Calu3 (cell line): ENCODE measurements at regions of chr15 and their contacts with region 1.

Region 1: DNA sequence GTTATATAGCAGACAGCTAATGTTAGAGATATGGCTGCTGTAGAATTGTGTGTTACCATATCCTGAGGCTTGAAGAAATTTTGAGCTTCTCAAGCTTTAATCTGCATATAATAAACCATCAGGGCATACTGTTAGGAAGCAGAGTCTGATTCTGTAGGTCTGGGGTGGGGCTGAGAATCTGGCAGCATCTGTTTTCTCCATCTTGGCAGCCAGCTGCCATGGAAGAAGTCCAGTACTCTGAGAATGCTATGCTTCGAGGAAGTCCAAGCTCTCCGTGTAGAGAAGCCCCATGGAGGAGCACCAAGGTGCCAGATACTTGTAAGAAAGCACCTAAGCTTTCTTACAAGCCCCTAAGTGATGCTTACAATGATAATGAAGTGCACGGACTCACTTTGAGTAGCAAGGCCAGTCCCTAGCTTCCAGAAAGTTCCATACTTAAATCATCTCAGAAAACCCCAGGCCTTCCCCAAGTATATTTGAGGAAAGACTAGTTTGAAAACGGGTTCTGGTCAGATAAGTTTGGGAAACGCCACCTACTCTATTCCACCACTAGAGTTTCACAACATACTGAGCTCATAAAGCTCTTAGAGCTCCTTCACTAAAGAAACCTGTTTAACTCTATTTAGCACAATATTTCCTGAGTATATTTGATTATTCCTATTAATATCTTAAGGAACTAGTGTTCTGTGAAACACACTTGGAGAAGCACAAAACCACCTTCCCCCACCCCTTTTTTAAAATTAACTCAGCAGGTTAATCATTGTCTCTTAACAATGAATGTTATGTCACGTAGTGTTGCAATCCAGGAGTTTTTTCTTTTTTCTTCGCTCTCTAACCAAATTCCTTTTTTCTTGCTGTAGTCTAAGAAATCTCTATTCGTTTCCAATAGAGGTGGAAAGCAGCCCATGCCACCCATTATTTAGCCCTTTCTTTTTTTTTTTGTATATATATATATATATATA is 59.9 kb upstream of the RASGRP1 start:
- DNase-seq: peak; percentile 7
- H3K4me3 Mint-ChIP-seq: no peak overlapping the region
- H3K27ac Mint-ChIP-seq: no peak overlapping the region
- H3K4me1 Mint-ChIP-seq: peaks cover 51% of the 10 kb centered on the region
- H3K27me3 Mint-ChIP-seq: no peaks in the 10 kb centered on the region
- CTCF ChIP-seq: no peak

Region 2: GRCh38 chr15:38589502-38589901 is 35.0 kb before region 1 on chr15:
- CTCF ChIA-PET with region 1: no interaction called
- intact Hi-C with region 1: loop called (anchors 5 kb)
- DNase-seq: peak; percentile 48
- H3K4me3 Mint-ChIP-seq: no peak overlapping the region
- H3K27ac Mint-ChIP-seq: peak overlapping the region; percentile 81
- H3K4me1 Mint-ChIP-seq: peaks cover 13% of the 10 kb centered on the region
- H3K27me3 Mint-ChIP-seq: no peaks in the 10 kb centered on the region
- CTCF ChIP-seq: no peak

Region 3: DNA sequence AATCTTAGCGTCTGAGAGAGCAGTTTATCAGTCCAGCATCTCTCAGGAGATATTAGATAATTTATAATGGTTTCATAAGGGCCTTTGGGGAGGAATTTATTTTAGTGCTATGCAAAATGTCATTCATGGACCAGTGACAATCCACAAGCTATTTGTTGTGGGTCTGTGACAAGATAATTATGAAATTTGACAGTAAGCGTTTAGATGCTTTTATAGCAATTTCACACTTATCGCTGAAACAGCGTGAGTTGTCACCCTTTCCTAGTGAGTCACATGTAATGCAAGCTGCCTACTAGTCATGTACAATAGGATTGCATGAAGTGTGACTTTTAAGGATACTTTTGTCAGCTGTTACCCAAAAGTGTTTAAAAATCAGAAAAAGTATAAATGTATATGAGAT is 640.7 kb after region 1 on chr15:
- CTCF ChIA-PET with region 1: no interaction called
- intact Hi-C with region 1: no loop called
- DNase-seq: no peak
- H3K4me3 Mint-ChIP-seq: no peak overlapping the region
- H3K27ac Mint-ChIP-seq: no peak overlapping the region
- H3K4me1 Mint-ChIP-seq: peaks cover 2% of the 10 kb centered on the region
- H3K27me3 Mint-ChIP-seq: no peaks in the 10 kb centered on the region
- CTCF ChIP-seq: no peak